Activated B cell treated with CpG ODN at 0.5 μM for 24 hours (primary cell): ENCODE measurements at regions of chr5 and their contacts with region 1.

Region 1: DNA sequence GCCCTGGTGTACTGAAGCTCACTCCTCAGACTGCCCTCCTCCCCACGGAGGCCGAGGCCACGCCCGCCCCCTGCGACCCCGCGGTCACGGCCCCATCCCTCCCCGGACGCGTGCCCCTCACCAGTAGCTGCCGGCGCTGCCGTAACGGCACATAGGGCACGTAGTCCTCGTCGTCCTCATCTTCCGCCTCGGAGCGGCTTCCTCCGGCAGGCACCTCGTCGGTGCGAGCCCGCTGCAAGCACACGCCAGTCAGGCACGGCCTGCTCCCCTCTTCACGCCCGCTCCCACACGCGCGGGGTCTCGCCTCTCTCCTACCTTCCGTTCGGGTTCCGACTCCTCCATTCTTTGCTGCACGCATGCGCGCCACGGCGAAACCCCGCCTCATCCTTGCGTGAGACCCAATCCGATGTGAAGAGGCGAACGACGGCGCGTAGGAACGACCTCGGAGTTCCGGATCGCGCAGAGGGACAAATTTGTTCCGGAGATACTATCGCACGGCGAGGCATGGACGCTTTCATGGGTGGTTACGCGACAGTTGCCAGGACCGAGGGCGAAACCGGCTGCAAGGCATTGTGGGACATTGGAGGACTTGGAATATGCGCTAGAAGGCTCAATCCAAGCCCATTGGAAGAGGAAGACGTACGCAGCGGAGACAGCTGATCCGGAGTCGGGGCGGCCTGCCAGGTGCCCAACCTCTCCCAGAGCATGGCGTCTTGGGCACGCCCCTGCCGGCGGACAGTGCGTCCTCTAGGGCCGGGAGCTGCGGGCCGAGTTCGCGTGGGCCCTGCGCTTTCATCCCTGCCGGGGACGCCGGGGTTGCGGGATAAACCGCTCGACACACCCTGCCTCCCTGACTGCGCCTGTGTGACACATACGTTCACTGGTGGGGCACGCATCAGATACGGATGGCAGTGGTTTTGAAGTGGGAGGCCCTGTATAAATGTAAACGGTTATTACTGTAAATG is at the start of gene DDX41:
- DNase-seq: peak; percentile 93
- ATAC-seq: peak; percentile 92
- H3K4me3 Mint-ChIP-seq: peak within 1 kb of the TSS; percentile 98
- H3K27ac Mint-ChIP-seq: peak within 1 kb of the TSS; percentile 94
- H3K4me1 Mint-ChIP-seq: peaks cover 50% of the 10 kb centered on the region
- H3K27me3 Mint-ChIP-seq: no peaks in the 10 kb centered on the region
- CTCF ChIP-seq: no peak
- total RNA-seq, gene DDX41: 128 and 144 TPM in 2 replicates

Region 2: DNA sequence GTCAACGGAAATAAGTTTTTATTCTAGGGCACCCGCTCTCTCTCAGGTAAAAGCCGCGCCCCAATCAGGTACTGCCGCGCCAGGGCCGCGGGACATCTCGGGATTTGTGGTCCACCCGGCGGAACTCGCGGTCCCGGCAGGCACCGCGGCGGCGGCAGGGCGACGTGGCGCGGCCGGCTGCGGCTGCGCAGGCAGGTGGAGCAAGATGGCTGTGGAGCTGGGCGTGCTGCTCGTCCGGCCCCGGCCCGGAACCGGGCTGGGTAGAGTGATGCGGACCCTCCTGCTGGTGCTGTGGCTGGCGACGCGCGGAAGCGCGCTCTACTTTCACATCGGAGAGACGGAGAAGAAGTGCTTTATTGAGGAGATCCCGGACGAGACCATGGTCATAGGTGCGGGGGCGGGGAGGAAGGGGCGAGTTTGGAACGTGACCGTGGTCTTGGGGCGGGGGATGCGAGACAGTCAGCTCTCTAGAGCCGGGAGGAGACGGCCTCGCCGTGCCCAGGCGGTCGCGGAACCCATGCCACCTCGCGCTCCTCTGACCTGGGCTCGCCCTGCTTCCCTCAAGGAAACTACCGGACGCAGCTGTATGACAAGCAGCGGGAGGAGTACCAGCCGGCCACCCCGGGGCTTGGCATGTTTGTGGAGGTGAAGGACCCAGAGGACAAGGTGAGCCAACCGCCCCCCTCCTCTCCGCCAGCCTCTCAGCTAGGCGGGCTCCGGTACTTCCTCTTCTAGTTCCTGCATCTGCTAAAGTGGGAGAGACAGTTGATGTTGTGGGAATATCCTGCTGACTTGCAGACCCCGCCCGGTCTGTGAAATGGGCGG is 75.3 kb after region 1 on chr5 and contains the start of gene TMED9:
- CTCF ChIA-PET with region 1: no interaction called
- POLR2A ChIA-PET with region 1: interaction called, 3 read pairs
- intact Hi-C with region 1: loop called (anchors 2 kb)
- DNase-seq: peak; percentile 85
- ATAC-seq: peak; percentile 98
- H3K4me3 Mint-ChIP-seq: peak within 1 kb of the TSS; percentile 100
- H3K27ac Mint-ChIP-seq: peak within 1 kb of the TSS; percentile 98
- H3K4me1 Mint-ChIP-seq: peaks cover 20% of the 10 kb centered on the region
- H3K27me3 Mint-ChIP-seq: peaks cover 7% of the 10 kb centered on the region
- CTCF ChIP-seq: no peak
- total RNA-seq, gene TMED9: 78.4 and 82.2 TPM in 2 replicates